Aorta (tissue), 5 donors: ENCODE measurements at regions of chr2 and their contacts with region 1.

Region 1: GRCh38 chr2:64040161-64040560 is 20.9 kb upstream of the VPS54 start:
- DNase-seq: no peak
- ATAC-seq: no peak
- H3K4me3 ChIP-seq: no peak overlapping the region
- H3K27ac ChIP-seq: no peak overlapping the region
- H3K4me1 ChIP-seq: no peaks in the 10 kb centered on the region
- H3K27me3 ChIP-seq: no peaks in the 10 kb centered on the region

Region 2: DNA sequence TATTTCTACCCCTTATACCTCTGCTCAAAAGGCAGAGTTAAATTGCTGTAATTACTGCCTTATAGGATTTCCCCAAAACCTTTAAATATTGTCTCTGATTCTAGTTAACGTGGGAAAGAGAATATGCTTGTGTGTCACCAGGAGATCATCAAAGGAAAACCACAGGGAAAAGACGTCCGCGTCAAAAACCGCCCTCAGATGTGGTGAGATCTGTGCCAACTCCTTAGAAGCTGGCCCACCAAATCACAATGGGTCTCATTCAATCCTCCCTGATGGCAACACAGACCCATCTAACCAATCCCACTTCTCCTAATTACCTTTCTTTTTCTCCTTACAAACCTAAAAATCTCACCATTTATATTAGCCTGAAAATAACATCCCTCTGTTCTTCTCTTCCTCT is 46.3 kb before region 1 on chr2:
- intact Hi-C with region 1: no loop called
- DNase-seq: no peak
- ATAC-seq: no peak
- H3K4me3 ChIP-seq: no peak overlapping the region
- H3K27ac ChIP-seq: no peak overlapping the region
- H3K4me1 ChIP-seq: no peaks in the 10 kb centered on the region
- H3K27me3 ChIP-seq: no peaks in the 10 kb centered on the region

Region 3: GRCh38 chr2:64453770-64454385 is 413.7 kb after region 1 on chr2 and contains the start of gene LGALSL:
- intact Hi-C with region 1: no loop called
- DNase-seq: peak; percentile 86 to 92
- ATAC-seq: peak; percentile 90
- H3K4me3 ChIP-seq: peak within 1 kb of the TSS; percentile 57 to 85
- H3K27ac ChIP-seq: peak within 1 kb of the TSS; percentile 97 to 100
- H3K4me1 ChIP-seq: no peaks in the 10 kb centered on the region
- H3K27me3 ChIP-seq: no peaks in the 10 kb centered on the region
- total RNA-seq, gene LGALSL: 18.5 to 26.8 TPM

Region 4: DNA sequence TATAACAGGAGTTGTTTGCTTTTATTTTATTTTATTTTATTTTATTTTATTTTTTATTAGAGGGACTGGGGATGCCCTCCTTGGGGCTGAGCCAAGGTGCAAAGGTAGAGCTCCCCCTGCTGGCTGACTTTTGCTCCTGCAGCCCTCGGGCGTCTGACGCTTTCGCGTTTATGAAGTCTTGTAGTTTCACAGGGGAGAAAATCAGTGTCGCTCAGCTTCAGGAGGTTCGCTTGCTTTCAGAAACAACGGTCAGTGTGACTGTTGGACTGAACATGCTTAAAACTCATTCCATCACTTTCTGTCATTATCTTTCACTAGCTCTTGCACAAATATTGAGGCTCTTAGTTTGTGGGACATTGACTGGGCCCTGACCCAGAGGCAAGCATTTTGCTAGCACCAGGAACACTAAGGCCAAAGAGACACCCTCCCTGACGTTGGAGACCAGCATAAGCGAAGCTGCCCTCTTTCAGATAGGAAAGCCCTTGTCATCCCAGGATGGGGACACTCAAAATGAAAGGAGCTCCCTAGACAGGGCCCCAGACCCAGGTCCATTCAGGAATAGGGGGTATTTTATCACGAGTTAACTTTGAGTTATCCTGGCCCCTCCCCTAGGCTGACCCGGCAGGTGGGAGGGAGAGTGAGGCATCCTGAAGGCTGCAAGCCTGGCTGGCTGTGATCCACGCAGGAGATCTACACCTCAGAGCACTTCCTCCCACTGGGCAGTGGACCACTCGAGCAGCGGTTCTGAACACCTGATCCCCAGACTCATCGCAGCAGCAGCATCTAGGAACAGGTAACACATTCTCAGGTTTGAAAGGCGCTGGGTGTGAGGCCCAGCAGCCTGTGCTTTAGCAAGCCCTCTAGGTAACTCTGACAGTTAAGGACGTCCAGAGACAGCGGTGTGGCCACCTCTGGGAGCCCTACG is 448.2 kb after region 1 on chr2:
- intact Hi-C with region 1: loop called (anchors 5 to 10 kb)
- DNase-seq: peak; percentile 71 to 90
- ATAC-seq: peak; percentile 76
- H3K4me3 ChIP-seq: no peak overlapping the region
- H3K27ac ChIP-seq: no peak overlapping the region
- H3K4me1 ChIP-seq: peaks cover 0 to 2% of the 10 kb centered on the region in 2 donors
- H3K27me3 ChIP-seq: no peaks in the 10 kb centered on the region